ENCODE measurements at regions of chr19 and their contacts with region 1.

Region 1: DNA sequence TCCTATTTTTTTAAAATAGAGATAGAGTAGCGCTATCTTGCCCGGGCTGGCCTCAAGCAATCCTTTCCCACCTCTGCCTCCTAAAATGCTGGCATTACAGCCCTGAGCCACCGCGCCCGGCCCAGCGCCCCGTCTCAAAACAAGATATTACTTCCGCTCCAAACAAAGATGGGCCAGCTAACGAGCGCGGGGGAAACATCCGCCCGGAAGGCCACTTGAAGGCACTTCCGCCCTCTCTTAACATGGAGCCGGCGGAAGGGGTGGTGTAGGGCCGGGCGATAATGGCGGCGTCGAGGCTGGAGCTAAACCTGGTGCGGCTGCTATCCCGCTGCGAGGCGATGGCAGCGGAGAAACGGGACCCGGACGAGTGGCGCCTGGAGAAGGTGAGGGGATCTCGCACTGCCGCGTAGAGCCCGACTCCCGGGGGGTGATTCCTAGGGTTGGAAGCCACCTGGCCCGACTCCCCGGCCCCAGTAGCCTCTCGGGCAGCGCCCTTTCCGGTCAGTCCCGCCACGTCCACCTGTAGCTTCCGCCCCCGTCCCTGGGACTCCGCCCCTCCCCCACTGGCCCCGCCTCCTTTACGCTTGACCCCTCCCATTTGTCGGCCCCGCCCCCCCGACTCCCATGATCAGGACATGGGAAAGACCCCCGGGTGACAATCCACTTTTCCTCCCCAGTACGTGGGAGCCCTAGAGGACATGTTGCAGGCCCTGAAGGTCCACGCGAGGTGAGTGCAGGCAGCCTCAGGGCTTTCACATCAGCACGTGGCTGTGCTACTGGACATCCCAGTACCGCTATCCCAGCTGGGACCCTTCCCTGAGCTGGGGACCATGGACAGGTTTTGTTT is at the start of gene USE1:
- DNase-seq: peak; percentile 70 to 91 (median 89)
- ATAC-seq: peak; percentile 97
- H3K4me3 ChIP-seq: peak within 1 kb of the TSS; percentile 92
- H3K4me3 Mint-ChIP-seq: peak within 1 kb of the TSS; percentile 83 to 99 (median 90)
- H3K27ac ChIP-seq: peak within 1 kb of the TSS; percentile 89
- H3K27ac Mint-ChIP-seq: peak within 1 kb of the TSS; percentile 97 to 100 (median 99)
- H3K4me1 ChIP-seq: peaks cover 13 to 16% of the 10 kb centered on the region in 2 donors
- H3K4me1 Mint-ChIP-seq: peaks cover 0 to 16% (median 12%) of the 10 kb centered on the region in 7 donors
- H3K27me3 ChIP-seq: no peaks in the 10 kb centered on the region
- H3K27me3 Mint-ChIP-seq: no peaks in the 10 kb centered on the region
- total RNA-seq, gene USE1: 24.7 to 51.1 (median 30.5) TPM

Region 2: DNA sequence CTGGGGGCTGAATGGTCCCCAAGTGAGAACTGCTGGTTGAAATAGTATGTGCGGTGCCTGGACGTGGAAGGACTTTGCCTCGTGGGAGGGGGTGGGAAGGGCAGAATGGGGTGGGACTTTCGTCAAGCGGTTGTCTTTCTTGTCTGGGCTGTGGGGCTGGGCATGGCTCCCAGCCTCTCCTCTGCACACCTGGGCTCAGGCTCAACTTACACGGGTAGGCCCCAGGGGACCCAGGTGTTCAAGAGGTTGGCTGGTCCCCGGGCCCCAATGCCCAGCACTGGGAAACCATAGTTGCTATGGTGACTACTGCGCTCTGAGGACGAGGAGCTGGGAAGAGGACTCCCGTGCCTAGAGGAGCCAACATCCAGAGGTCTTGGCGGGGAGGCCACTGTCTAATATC is 488.4 kb before region 1 on chr19:
- CTCF ChIA-PET with region 1: no interaction called
- POLR2A ChIA-PET with region 1: no interaction called
- intact Hi-C with region 1: no loop called
- DNase-seq: no peak
- ATAC-seq: no peak
- H3K4me3 ChIP-seq: no peak overlapping the region
- H3K4me3 Mint-ChIP-seq: no peak overlapping the region
- H3K27ac ChIP-seq: no peak overlapping the region
- H3K27ac Mint-ChIP-seq: no peak overlapping the region
- H3K4me1 ChIP-seq: no peaks in the 10 kb centered on the region
- H3K4me1 Mint-ChIP-seq: no peaks in the 10 kb centered on the region
- H3K27me3 ChIP-seq: no peaks in the 10 kb centered on the region
- H3K27me3 Mint-ChIP-seq: peaks cover 0 to 6% (median 0%) of the 10 kb centered on the region in 5 donors

Region 3: GRCh38 chr19:17125715-17126677 is 89.4 kb before region 1 on chr19:
- CTCF ChIA-PET with region 1: no interaction called
- POLR2A ChIA-PET with region 1: interaction called, 21 read pairs
- intact Hi-C with region 1: no loop called
- DNase-seq: peak; percentile 58 to 87 (median 83)
- ATAC-seq: peak; percentile 91
- H3K4me3 ChIP-seq: peak overlapping the region; percentile 71
- H3K4me3 Mint-ChIP-seq: peak overlapping the region; percentile 81 to 95 (median 86)
- H3K27ac ChIP-seq: peak overlapping the region; percentile 95
- H3K27ac Mint-ChIP-seq: peak overlapping the region; percentile 90 to 100 (median 99)
- H3K4me1 ChIP-seq: peaks cover 33 to 41% of the 10 kb centered on the region in 2 donors
- H3K4me1 Mint-ChIP-seq: peaks cover 18 to 71% (median 50%) of the 10 kb centered on the region in 7 donors
- H3K27me3 ChIP-seq: no peaks in the 10 kb centered on the region
- H3K27me3 Mint-ChIP-seq: no peaks in the 10 kb centered on the region

Region 4: DNA sequence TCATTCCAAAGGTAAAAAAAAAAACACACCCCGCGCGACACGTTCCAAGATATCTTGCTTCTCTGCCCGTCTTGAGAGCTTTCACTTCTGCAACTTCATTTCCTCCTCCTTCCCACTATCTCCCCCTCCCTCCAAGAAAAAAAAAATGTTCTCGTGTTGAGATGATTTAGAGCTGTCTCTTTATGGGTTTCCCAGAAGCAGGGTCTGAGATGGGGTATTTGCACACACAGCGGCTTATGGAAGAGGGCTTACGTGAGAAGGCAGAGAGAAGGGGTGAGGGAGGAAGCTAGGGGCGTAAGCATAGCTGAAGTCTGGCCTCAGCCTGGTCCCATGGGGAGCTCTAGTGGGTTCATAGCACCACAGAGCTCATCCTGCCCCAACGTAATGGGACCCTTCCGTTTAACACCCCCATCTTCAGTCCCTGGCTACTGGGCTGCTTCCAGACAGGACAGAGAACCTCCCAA is 31.5 kb before region 1 on chr19:
- CTCF ChIA-PET with region 1: interaction called, 8 read pairs
- POLR2A ChIA-PET with region 1: interaction called, 29 read pairs
- intact Hi-C with region 1: no loop called
- DNase-seq: peak in 6 of 9 donors; percentile 18 to 41 (median 34)
- ATAC-seq: peak; percentile 64
- H3K4me3 ChIP-seq: peak overlapping the region; percentile 75
- H3K4me3 Mint-ChIP-seq: peak overlapping the region; percentile 82 to 94 (median 89)
- H3K27ac ChIP-seq: peak overlapping the region; percentile 68
- H3K27ac Mint-ChIP-seq: peak overlapping the region; percentile 85 to 99 (median 96)
- H3K4me1 ChIP-seq: peaks cover 13 to 16% of the 10 kb centered on the region in 2 donors
- H3K4me1 Mint-ChIP-seq: peaks cover 16 to 29% (median 20%) of the 10 kb centered on the region in 7 donors
- H3K27me3 ChIP-seq: no peaks in the 10 kb centered on the region
- H3K27me3 Mint-ChIP-seq: no peaks in the 10 kb centered on the region

Region 5: GRCh38 chr19:17226002-17226933 is 10.9 kb after region 1 on chr19 and contains the start of gene OCEL1:
- CTCF ChIA-PET with region 1: interaction called, 5 read pairs
- POLR2A ChIA-PET with region 1: interaction called, 77 read pairs
- intact Hi-C with region 1: loop called (anchors 1 kb)
- DNase-seq: peak; percentile 91 to 98 (median 97)
- ATAC-seq: peak; percentile 94
- H3K4me3 ChIP-seq: peak within 1 kb of the TSS; percentile 98
- H3K4me3 Mint-ChIP-seq: peak within 1 kb of the TSS; percentile 82 to 98 (median 94)
- H3K27ac ChIP-seq: peak within 1 kb of the TSS; percentile 81
- H3K27ac Mint-ChIP-seq: peak within 1 kb of the TSS; percentile 86 to 99 (median 97)
- H3K4me1 ChIP-seq: peaks cover 0 to 2% of the 10 kb centered on the region in 2 donors
- H3K4me1 Mint-ChIP-seq: peaks cover 3 to 8% (median 5%) of the 10 kb centered on the region in 7 donors
- H3K27me3 ChIP-seq: no peaks in the 10 kb centered on the region
- H3K27me3 Mint-ChIP-seq: no peaks in the 10 kb centered on the region
- total RNA-seq, gene OCEL1: 21.8 to 32.8 (median 29.8) TPM

Region 6: DNA sequence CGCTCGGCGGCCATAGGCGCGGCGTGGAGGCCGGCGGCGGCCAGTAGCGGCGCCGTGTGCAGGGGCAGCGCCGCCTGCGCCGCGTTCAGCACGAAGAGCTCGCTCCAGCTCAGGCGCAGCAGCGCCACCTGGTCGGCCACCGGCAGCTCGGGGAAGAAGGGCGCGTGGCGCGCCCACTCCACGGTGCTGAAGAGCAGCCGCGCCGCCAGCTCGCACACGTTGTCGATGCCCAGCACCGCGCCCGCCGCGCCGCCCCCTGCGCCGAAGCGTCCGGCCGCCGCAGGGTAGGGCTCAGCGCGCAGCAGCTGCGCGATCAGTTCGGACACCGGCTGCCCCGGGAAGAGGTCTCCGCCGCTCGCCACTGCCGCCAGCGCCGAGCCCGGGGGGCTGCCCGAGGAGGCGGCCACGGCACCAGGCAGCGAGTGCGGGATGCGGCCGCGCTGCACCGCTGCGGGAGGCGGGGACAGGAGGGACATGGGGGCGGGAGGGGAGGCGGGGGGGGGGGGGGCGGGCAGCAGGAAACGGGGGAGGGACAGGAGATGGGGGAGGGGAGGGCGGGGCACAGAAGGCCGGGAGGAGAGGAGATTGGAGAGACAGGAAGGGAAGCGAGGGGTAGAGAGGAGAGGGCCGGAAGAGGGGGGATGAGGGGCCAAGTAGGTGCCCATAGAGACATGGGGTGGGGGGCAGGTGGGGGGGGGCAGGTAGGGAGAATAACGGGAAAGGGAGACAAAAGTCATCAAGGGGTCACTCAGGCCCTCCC is 20.4 kb after region 1 on chr19:
- CTCF ChIA-PET with region 1: interaction called, 5 read pairs
- POLR2A ChIA-PET with region 1: interaction called, 30 read pairs
- intact Hi-C with region 1: loop called (anchors 1 kb)
- DNase-seq: peak; percentile 62 to 75 (median 73)
- ATAC-seq: peak; percentile 95
- H3K4me3 ChIP-seq: peak overlapping the region; percentile 74
- H3K4me3 Mint-ChIP-seq: peak overlapping the region in 9 of 10 donors; percentile 49 to 88 (median 83)
- H3K27ac ChIP-seq: peak overlapping the region; percentile 64
- H3K27ac Mint-ChIP-seq: peak overlapping the region in 1 of 9 donors; percentile 23
- H3K4me1 ChIP-seq: peaks cover 0 to 11% of the 10 kb centered on the region in 2 donors
- H3K4me1 Mint-ChIP-seq: peaks cover 4 to 22% (median 16%) of the 10 kb centered on the region in 7 donors
- H3K27me3 ChIP-seq: no peaks in the 10 kb centered on the region
- H3K27me3 Mint-ChIP-seq: no peaks in the 10 kb centered on the region

Region 7: DNA sequence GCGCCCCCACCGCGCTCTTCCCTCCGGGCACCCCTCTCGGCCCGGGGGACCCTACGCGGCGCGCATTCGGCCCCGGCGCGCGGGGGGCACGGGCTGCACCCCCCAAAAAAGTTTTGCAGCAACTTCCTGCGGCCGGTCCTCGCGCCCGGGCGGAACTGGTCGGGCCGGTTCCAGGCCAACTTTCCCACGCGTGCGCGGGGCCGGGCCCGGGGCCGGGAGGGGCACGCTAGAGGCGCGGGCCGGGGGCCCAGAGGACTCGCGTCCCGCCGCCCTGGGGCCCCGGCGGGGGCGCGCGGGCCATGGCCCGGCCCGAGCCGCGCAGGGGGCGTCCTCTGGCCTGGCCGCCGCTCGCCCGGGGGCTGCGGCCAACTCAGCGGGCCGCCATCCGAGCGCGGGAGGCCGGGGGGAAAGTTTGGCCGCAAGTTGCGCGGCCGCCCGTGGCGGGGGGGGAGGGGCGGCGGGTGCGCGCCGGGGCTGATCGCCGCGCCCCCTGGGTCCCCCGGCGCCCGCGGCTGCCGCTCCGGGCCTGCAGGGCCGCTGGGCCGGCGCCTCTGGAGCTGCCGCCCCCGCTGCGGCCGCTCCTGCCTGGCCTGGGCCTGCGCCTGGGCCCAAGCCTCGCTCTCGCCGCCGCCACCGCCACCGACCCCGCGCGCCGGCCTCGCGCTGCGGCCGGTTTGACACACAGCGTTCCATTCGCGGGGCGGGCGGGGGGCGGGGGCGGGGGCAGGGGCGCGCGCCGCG is 30.1 kb after region 1 on chr19 and contains the start of gene NR2F6:
- CTCF ChIA-PET with region 1: no interaction called
- POLR2A ChIA-PET with region 1: interaction called, 12 read pairs
- intact Hi-C with region 1: loop called in 1 of 2 experiments (anchors 1 kb)
- DNase-seq: peak in 3 of 9 donors; percentile 18 to 38 (median 26)
- ATAC-seq: peak; percentile 28
- H3K4me3 ChIP-seq: peak within 1 kb of the TSS; percentile 55
- H3K4me3 Mint-ChIP-seq: peak within 1 kb of the TSS; percentile 71 to 95 (median 86)
- H3K27ac ChIP-seq: peak within 1 kb of the TSS; percentile 60
- H3K27ac Mint-ChIP-seq: peak within 1 kb of the TSS in 7 of 9 donors; percentile 31 to 86 (median 74)
- H3K4me1 ChIP-seq: peaks cover 0 to 11% of the 10 kb centered on the region in 2 donors
- H3K4me1 Mint-ChIP-seq: peaks cover 0 to 14% (median 5%) of the 10 kb centered on the region in 7 donors
- H3K27me3 ChIP-seq: no peaks in the 10 kb centered on the region
- H3K27me3 Mint-ChIP-seq: peaks cover 0 to 16% (median 0%) of the 10 kb centered on the region in 5 donors
- total RNA-seq, gene NR2F6: 2.2 to 7.8 (median 7.0) TPM